ENCODE measurements at regions of chr3 and their contacts with region 1.

Region 1: GRCh38 chr3:90062016-90062415 is 954.6 kb downstream of the EPHA3 start:
- DNase-seq: no peak

Region 2: DNA sequence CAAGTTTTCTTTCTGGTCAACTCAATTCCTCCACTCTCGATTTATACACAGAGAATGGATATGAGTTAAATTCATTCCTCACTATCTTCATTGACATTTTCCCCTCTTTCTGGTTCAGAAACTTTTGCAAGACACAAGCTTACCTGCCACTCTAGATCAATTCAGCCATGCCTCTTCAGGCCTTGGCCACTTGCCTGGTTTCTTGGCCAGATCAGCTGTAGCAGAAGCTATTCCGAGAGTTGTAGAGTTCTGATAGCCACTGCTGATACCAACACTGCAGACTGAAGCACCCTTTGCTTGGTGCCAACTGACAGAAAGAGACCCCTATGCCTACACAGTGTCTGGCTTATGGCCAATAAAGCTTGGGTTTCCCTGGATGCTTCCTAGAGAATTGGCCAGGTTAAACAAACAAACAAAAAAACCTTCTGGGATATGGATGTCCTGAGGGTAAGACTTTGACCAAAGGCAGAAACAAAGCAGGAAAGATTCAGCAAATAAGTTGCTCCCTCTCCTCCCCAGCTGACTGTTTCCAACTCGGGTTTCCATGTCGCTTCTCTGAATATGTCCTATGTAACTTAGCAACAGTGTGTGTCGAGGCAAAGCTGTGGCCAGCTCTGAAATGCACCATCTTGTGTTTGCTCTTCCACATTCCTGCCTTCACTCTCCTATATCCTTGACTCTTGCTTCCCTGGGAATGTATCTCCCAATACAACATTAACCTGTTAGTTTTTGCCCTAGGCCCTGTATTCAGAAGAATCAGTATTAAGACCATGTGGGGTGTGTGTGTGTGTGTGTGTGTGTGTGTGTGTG is 433.0 kb before region 1 on chr3:
- intact Hi-C with region 1: no loop called
- DNase-seq: no peak

Region 3: GRCh38 chr3:89955156-89955555 is 106.9 kb before region 1 on chr3:
- intact Hi-C with region 1: loop called in 1 of 2 experiments (anchors 10 kb)
- DNase-seq: no peak